ENCODE measurements at regions of chr1 and their contacts with region 1.

Region 1: GRCh38 chr1:193121616-193122593 is at the start of gene CDC73:
- DNase-seq: peak; percentile 98 to 100 (median 99)
- ATAC-seq: peak; percentile 92
- H3K4me3 ChIP-seq: peak within 1 kb of the TSS; percentile 89 to 98
- H3K4me3 Mint-ChIP-seq: peak within 1 kb of the TSS; percentile 100
- H3K27ac ChIP-seq: peak within 1 kb of the TSS; percentile 94 to 96
- H3K27ac Mint-ChIP-seq: peak within 1 kb of the TSS; percentile 100
- H3K4me1 ChIP-seq: peaks cover 33% of the 10 kb centered on the region
- H3K4me1 Mint-ChIP-seq: peaks cover 55% of the 10 kb centered on the region
- H3K27me3 ChIP-seq: no peaks in the 10 kb centered on the region
- H3K27me3 Mint-ChIP-seq: no peaks in the 10 kb centered on the region
- CTCF ChIP-seq: peak; percentile 84
- total RNA-seq, gene CDC73: 73.9 to 78.8 TPM

Region 2: DNA sequence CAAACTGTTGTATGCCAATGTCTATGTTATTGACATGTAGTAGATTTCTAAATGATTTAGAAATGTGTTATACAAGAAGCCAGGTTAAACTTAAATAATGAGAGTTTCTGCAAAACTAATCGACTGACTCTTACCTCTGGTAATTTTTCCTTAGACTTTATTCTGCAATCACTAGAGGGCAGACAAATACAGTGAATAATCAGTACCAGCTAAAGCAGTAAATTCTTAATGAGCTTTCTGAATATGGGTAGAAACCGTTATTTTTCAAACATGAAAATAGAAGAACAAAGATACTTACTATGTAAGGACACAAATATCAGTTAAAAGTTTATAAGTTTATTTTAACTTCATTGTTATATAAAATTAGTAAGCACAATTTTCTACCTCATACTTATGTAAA is 644.3 kb before region 1 on chr1:
- CTCF ChIA-PET with region 1: no interaction called
- POLR2A ChIA-PET with region 1: no interaction called
- intact Hi-C with region 1: loop called (anchors 1 to 5 kb)
- DNase-seq: peak in 2 of 9 experiments; percentile 52 to 65
- ATAC-seq: peak; percentile 77
- H3K4me3 ChIP-seq: no peak overlapping the region
- H3K4me3 Mint-ChIP-seq: no peak overlapping the region
- H3K27ac ChIP-seq: no peak overlapping the region
- H3K27ac Mint-ChIP-seq: no peak overlapping the region
- H3K4me1 ChIP-seq: no peaks in the 10 kb centered on the region
- H3K4me1 Mint-ChIP-seq: no peaks in the 10 kb centered on the region
- H3K27me3 ChIP-seq: peaks cover 0 to 2% of the 10 kb centered on the region in 2 experiments
- H3K27me3 Mint-ChIP-seq: no peaks in the 10 kb centered on the region
- CTCF ChIP-seq: peak; percentile 64

Region 3: GRCh38 chr1:193104906-193105820 is 16.7 kb before region 1 on chr1 and contains the start of gene GLRX2:
- CTCF ChIA-PET with region 1: interaction called, 10 read pairs
- POLR2A ChIA-PET with region 1: interaction called, 16 read pairs
- intact Hi-C with region 1: loop called (anchors 1 to 2 kb)
- DNase-seq: peak; percentile 12 to 79 (median 72)
- ATAC-seq: peak; percentile 97
- H3K4me3 ChIP-seq: peak within 1 kb of the TSS; percentile 61 to 70
- H3K4me3 Mint-ChIP-seq: peak within 1 kb of the TSS; percentile 96
- H3K27ac ChIP-seq: peak within 1 kb of the TSS; percentile 33 to 38
- H3K27ac Mint-ChIP-seq: peak within 1 kb of the TSS; percentile 88
- H3K4me1 ChIP-seq: peaks cover 14% of the 10 kb centered on the region
- H3K4me1 Mint-ChIP-seq: peaks cover 24% of the 10 kb centered on the region
- H3K27me3 ChIP-seq: no peaks in the 10 kb centered on the region
- H3K27me3 Mint-ChIP-seq: no peaks in the 10 kb centered on the region
- CTCF ChIP-seq: no peak
- total RNA-seq, gene GLRX2: 3.4 to 4.2 TPM